ENCODE measurements at regions of chr17 and their contacts with region 1.

Region 1: DNA sequence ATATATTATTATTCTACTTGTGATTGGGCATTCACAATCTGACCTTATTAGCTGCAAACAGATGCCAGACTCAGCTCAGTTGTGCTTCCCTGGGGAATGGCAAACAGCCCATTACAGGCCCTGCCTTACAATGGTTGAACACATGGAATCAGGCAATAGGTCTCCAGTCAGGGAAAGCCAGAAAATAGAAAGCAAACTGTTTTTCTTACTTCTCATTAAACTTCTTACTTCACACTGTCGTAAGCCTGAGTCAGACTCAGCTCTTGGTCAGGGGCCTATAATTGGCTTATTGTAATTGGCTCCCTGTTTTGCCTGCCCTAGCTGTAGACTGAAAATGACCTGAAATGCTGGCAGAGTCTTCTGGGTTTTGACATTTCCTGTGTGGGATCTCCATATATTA is 77.0 kb upstream of the CA10 start:
- DNase-seq: no peak
- H3K4me3 ChIP-seq: no peak overlapping the region
- H3K27ac ChIP-seq: no peak overlapping the region
- H3K4me1 ChIP-seq: no peaks in the 10 kb centered on the region
- H3K27me3 ChIP-seq: no peaks in the 10 kb centered on the region
- CTCF ChIP-seq: no peak
- POLR2A ChIP-seq: no peak

Region 2: GRCh38 chr17:52159246-52160135 is 76.0 kb before region 1 on chr17:
- intact Hi-C with region 1: no loop called
- DNase-seq: no peak
- H3K4me3 ChIP-seq: peak overlapping the region in 2 of 3 donors; percentile 30 to 57
- H3K27ac ChIP-seq: no peak overlapping the region
- H3K4me1 ChIP-seq: no peaks in the 10 kb centered on the region
- H3K27me3 ChIP-seq: peaks cover 6 to 70% of the 10 kb centered on the region in 2 donors
- CTCF ChIP-seq: no peak
- POLR2A ChIP-seq: no peak

Region 3: GRCh38 chr17:53234138-53234537 is 998.6 kb after region 1 on chr17:
- intact Hi-C with region 1: loop called (anchors 10 kb)
- DNase-seq: no peak
- H3K4me3 ChIP-seq: no peak overlapping the region
- H3K27ac ChIP-seq: no peak overlapping the region
- H3K4me1 ChIP-seq: no peaks in the 10 kb centered on the region
- H3K27me3 ChIP-seq: no peaks in the 10 kb centered on the region
- CTCF ChIP-seq: no peak
- POLR2A ChIP-seq: no peak